ENCODE measurements at regions of chr3 and their contacts with region 1.

Region 1: GRCh38 chr3:127817396-127817841 is 4.9 kb downstream of the MGLL start:
- DNase-seq: no peak
- H3K4me3 ChIP-seq: no peak overlapping the region
- CTCF ChIP-seq: no peak

Region 2: GRCh38 chr3:126692845-126693244 is 1124.6 kb before region 1 on chr3:
- CTCF ChIA-PET with region 1: no interaction called
- POLR2A ChIA-PET with region 1: no interaction called
- DNase-seq: no peak
- H3K4me3 ChIP-seq: no peak overlapping the region
- CTCF ChIP-seq: no peak

Region 3: DNA sequence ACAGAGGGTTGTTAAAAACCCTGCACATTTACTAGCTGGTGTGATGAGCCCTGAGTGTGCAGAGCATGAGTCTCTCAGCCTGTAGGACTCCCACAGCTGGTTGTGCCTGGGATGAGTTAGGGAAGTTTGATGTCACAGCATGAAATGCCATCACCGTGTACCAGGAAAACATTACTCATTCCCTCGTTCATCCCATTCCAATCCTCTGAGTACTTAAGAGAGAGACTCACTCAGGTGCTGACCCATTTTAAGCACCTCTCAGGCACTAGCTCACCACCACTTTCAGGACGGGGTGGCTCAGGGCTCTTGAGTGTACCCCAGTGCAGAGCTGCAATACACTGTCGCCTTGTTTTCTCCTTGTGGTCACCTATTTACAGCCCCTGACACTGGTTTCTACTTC is 13.8 kb before region 1 on chr3:
- CTCF ChIA-PET with region 1: interaction called, 15 read pairs
- POLR2A ChIA-PET with region 1: interaction called, 6 read pairs
- DNase-seq: peak; percentile 76
- H3K4me3 ChIP-seq: no peak overlapping the region
- CTCF ChIP-seq: no peak